Cardiac septum (tissue), 1 donor: ENCODE measurements at regions of chr7 and their contacts with region 1.

Region 1: GRCh38 chr7:73865738-73866445 is 4.9 kb downstream of the TMEM270 start:
- DNase-seq: no peak

Region 2: DNA sequence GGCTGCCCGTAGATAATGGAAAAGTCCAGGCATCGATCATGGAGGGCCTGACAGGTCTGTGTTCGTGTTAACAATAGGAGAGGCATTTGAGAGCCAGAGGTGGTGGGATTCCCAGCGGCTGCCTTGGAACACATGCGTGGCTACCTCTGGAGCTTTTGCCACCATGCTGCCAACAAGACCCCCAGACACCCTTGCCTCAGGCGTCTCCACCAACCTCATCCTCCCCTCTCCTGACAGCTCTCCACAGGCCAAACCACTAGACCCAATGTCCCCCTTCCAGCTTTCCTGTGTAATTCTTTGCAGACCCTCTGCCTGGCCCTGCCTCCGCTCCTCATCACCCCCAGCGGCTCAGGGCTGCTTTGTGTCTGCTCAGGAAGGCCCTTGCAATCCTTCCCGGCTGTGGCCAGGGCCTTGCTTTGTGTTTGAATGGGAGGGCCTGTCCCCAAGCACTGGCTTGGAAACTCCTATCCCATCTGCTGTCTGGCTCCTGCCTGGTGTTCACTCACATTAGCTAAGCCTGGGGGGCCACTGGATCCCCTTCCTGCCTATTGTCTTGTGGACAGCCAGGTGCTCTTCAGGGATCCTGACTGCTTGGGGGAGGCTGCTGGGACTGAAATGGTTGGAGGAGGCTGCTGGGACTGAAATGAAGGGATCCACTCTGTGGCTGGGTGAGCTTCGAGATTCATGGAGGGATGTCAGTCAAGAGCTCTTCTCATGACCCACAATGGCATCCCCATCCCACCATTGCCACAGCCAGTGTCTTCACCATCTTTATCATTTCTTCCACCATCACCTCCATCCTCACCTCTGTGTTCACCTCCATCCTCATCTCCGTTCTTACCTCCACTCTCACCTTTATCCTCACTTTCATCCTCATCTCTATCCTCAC is 101.3 kb after region 1 on chr7:
- intact Hi-C with region 1: no loop called
- DNase-seq: no peak

Region 3: DNA sequence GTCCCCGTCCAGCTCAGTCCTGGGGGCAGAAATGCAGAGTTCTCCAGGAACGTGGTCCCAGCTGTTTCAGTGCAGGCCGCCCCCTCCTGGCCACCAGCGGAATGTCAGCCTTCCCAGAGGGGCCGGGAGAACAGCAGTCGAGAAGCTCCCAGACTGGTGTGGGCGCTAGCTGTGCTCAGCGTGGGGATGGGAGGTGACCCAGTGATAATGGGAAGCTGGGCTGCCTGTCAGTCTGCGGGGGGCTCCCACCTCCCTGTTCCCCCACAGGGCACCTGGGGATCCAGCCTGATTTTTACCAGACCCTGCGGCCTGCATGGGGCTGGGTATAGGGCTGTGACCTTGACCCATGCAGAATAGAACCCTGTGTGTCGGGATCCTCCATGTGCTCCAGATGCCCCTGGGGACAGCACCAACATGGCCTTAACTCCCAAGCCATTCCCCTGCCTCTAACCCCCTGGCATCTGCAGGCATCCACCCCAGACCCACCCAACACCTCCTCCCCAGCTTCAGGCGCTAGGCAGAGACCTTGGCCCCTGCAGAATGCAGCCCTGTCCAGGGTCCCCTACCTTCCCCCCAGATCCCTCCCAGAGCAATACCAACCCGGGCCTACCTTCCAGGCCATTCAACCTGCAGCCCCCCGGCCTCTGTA is 161.1 kb after region 1 on chr7:
- intact Hi-C with region 1: loop called (anchors 5 kb)
- DNase-seq: peak; percentile 91

Region 4: DNA sequence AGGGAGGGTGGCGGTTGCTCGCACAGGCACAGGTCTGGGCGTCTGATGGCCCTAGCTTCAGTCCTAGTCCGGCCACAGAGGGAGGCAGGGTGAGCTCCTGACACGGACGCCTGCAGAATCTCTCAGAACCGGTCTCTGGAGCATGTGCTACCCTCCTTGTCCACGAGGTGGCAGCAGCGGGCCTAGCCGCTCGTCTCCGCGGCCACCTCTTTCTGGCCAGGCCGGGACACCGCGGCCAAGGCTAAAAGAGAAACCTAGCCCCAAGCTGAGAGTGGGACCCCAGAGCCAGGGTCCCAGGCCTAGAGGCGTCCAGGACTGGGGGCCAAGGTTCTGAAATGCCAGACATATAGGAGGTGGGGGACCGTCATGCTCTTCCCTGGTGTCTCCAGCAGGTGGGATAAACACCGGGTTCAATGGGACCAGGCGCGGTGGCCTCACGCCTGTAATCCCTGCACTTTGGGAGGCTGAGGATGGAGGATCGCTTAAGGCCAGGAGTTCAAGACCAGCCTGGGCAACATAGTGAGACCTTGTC is 340.8 kb after region 1 on chr7:
- intact Hi-C with region 1: loop called (anchors 10 kb)
- DNase-seq: peak; percentile 95